CD4-positive, alpha-beta T cell (primary cell): ENCODE measurements at regions of chr17 and their contacts with region 1.

Region 1: DNA sequence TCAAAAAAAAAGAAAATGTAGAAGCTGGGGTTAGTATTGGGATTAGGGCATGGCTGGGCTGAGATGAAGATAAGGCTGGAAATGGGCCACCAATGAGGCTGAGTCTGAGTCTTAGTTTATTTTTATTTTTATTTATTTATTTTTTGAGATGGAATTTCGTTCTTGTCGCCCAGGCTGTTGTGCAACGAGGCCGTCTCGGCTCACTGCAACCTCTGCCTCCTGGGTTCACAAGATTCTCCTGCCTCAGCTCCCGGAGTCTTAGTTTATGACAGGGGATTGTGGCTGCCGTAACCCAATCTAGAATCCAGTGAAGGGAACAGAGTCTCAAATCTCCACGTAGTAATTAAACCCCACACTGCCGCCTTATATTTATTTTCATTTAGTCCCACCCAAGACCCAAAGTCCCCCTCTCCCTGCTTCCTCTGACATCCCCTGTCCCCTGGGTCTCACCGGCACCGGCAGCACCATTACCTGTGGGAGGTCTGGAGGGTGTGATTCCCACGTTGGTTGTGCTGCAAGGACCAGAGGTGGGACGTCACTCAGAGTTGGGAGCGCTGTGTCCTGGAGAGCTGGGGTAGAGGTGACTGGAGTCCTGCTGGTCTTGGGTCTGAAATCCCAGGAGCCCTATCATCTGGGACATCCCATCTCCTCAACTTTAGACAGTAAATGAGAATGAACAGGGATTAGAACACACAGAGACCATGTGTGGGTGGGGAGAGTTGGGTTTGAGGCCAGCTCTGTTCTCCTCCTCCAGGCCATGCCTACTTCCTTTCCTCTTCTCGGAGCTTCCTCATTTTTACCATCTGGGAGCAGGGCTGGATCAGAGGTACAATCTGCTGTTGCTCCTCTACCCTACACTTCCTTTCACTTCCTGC is at the start of gene CLEC10A:
- DNase-seq: no peak
- ATAC-seq: no peak
- H3K4me3 ChIP-seq: no peak within 1 kb of the TSS
- H3K4me3 Mint-ChIP-seq: no peak within 1 kb of the TSS
- H3K27ac ChIP-seq: no peak within 1 kb of the TSS
- H3K27ac Mint-ChIP-seq: no peak within 1 kb of the TSS
- H3K4me1 ChIP-seq: peaks cover 19% of the 10 kb centered on the region
- H3K4me1 Mint-ChIP-seq: peaks cover 31% of the 10 kb centered on the region
- H3K27me3 ChIP-seq: no peaks in the 10 kb centered on the region
- H3K27me3 Mint-ChIP-seq: peaks cover 14% of the 10 kb centered on the region
- CTCF ChIP-seq: no peak
- total RNA-seq, gene CLEC10A: 0.59 to 0.96 TPM

Region 2: GRCh38 chr17:7021993-7022778 is 57.6 kb before region 1 on chr17:
- CTCF ChIA-PET with region 1: no interaction called
- POLR2A ChIA-PET with region 1: no interaction called
- intact Hi-C with region 1: no loop called
- DNase-seq: peak; percentile 55 to 90 (median 73)
- ATAC-seq: peak; percentile 62
- H3K4me3 ChIP-seq: peak overlapping the region; percentile 44
- H3K4me3 Mint-ChIP-seq: peak overlapping the region; percentile 84
- H3K27ac ChIP-seq: no peak overlapping the region
- H3K27ac Mint-ChIP-seq: peak overlapping the region; percentile 88
- H3K4me1 ChIP-seq: peaks cover 50% of the 10 kb centered on the region
- H3K4me1 Mint-ChIP-seq: peaks cover 48% of the 10 kb centered on the region
- H3K27me3 ChIP-seq: no peaks in the 10 kb centered on the region
- H3K27me3 Mint-ChIP-seq: peaks cover 11% of the 10 kb centered on the region
- CTCF ChIP-seq: peak; percentile 96

Region 3: GRCh38 chr17:7114875-7115614 is 35.2 kb after region 1 on chr17:
- CTCF ChIA-PET with region 1: no interaction called
- POLR2A ChIA-PET with region 1: no interaction called
- intact Hi-C with region 1: loop called in 1 of 2 experiments (anchors 5 kb)
- DNase-seq: peak in 1 of 14 experiments; percentile 11
- ATAC-seq: no peak
- H3K4me3 ChIP-seq: no peak overlapping the region
- H3K4me3 Mint-ChIP-seq: no peak overlapping the region
- H3K27ac ChIP-seq: no peak overlapping the region
- H3K27ac Mint-ChIP-seq: no peak overlapping the region
- H3K4me1 ChIP-seq: no peaks in the 10 kb centered on the region
- H3K4me1 Mint-ChIP-seq: no peaks in the 10 kb centered on the region
- H3K27me3 ChIP-seq: no peaks in the 10 kb centered on the region
- H3K27me3 Mint-ChIP-seq: peaks cover 7% of the 10 kb centered on the region
- CTCF ChIP-seq: no peak